Activated B cell treated with CpG ODN at 0.5 μM for 24 hours (primary cell): ENCODE measurements at regions of chr18 and their contacts with region 1.

Region 1: GRCh38 chr18:74342416-74343043 is 26.9 kb downstream of the C18orf63 start:
- DNase-seq: no peak
- ATAC-seq: no peak
- H3K4me3 Mint-ChIP-seq: no peak overlapping the region
- H3K27ac Mint-ChIP-seq: no peak overlapping the region
- H3K4me1 Mint-ChIP-seq: peaks cover 22% of the 10 kb centered on the region
- H3K27me3 Mint-ChIP-seq: no peaks in the 10 kb centered on the region
- CTCF ChIP-seq: peak; percentile 55

Region 2: DNA sequence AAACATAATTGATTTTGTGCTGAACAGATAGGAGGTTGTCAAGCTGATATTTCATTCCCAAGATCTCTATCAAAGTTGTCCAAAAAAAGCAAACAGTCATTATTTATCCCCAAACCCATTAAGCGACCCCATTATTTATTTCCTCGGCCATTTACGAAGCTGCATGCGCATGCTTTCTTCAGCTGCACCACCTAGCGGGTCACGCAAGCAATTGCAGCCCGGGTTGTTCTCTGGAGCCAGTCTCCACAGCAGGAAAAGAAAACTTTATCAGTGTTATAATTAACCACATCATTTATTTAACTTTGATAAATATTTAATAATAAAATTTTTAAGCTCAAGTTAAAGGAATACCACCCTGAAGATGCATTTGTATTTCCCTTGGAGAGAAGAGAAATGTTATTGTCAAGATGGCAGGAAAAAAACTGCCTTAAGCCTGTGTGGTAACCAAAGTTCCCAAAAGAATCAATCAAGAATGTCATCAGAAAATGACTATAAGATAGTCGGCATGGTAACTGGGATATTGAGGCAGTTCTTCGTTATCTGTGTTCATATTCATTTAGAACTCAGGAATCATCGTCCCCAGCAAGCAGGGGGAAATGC is 499.6 kb before region 1 on chr18:
- CTCF ChIA-PET with region 1: no interaction called
- POLR2A ChIA-PET with region 1: no interaction called
- intact Hi-C with region 1: loop called (anchors 2 kb)
- DNase-seq: no peak
- ATAC-seq: peak; percentile 52
- H3K4me3 Mint-ChIP-seq: peak overlapping the region; percentile 45
- H3K27ac Mint-ChIP-seq: no peak overlapping the region
- H3K4me1 Mint-ChIP-seq: peaks cover 3% of the 10 kb centered on the region
- H3K27me3 Mint-ChIP-seq: no peaks in the 10 kb centered on the region
- CTCF ChIP-seq: peak; percentile 88

Region 3: GRCh38 chr18:73901566-73901965 is 441.0 kb before region 1 on chr18:
- CTCF ChIA-PET with region 1: no interaction called
- POLR2A ChIA-PET with region 1: no interaction called
- intact Hi-C with region 1: no loop called
- DNase-seq: no peak
- ATAC-seq: no peak
- H3K4me3 Mint-ChIP-seq: no peak overlapping the region
- H3K27ac Mint-ChIP-seq: no peak overlapping the region
- H3K4me1 Mint-ChIP-seq: no peaks in the 10 kb centered on the region
- H3K27me3 Mint-ChIP-seq: no peaks in the 10 kb centered on the region
- CTCF ChIP-seq: no peak

Region 4: DNA sequence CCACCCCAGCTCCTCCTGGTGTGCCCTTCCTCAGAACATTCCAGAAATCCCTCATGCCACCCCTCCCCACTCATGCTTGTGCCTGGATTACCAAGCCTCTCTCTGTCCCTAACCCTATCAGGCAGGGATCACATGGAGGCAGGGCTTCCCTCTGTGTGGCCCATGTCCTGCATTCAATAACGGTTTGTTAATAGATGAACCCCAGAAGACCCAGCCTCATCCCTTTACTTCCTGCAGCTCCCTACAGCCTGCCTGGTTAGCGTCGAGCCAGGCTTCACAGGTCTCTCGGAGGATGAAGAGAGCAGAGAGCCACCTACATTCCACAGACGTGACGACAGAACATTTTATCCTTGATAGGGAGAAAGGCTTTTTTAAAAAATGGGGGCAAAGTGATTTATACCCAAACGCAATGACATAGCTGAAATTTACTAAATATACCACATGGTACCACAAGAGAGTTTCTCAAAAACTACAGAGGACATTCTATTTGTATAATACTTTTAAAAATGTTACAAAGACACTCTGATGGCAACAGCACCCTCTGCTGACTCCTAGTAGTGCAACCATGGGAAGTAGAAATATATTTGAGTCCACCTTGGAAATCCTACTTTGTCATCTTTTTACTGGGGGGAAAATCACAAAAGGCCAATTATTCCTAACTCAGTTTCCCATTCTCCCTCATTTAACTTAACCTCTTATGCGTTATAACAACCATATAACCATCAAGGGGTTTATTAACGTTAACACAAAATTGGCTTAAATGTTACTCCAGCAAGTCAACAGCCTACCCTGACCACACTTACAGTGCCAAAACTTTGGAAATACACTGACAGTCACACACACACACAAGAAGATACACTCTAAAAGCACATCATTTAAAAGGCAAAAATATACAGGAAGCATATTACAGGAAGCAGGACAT is 225.6 kb before region 1 on chr18:
- CTCF ChIA-PET with region 1: no interaction called
- POLR2A ChIA-PET with region 1: no interaction called
- intact Hi-C with region 1: loop called (anchors 1 kb)
- DNase-seq: no peak
- ATAC-seq: no peak
- H3K4me3 Mint-ChIP-seq: no peak overlapping the region
- H3K27ac Mint-ChIP-seq: no peak overlapping the region
- H3K4me1 Mint-ChIP-seq: peaks cover 9% of the 10 kb centered on the region
- H3K27me3 Mint-ChIP-seq: peaks cover 5% of the 10 kb centered on the region
- CTCF ChIP-seq: no peak

Region 5: DNA sequence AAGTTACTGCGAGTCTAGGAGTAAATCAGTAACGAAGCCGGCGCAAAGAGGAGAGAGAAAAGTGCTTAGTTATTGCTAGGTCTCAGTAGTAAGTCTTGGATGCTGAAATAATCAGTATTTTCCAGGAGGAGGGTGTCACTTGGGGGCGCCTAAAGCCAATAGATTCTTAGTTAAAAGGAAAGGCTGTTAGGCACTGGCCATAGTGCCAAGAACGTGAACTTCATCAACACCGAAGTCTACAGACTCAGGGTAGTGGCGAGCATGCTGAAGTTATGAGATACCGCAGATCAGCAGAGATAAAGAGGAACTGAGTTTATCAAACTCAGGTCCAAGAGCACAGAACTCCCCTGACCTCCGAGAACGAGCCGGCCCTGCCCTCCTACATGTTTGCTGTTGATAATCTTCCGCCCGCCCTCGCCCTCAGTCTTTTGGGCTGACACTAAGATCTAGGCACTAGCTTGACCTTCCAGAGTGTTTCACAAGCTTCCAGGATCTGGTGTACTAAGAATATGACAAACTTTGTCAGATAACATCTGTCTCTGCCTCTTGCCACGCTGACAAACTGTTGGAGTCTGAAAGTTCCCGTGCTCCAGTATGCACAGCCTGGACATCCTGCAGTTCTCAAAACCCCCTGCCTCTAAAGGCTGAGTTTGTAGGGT is 100.0 kb before region 1 on chr18:
- CTCF ChIA-PET with region 1: interaction called, 16 read pairs
- POLR2A ChIA-PET with region 1: no interaction called
- intact Hi-C with region 1: loop called (anchors 1 kb)
- DNase-seq: no peak
- ATAC-seq: peak; percentile 37
- H3K4me3 Mint-ChIP-seq: no peak overlapping the region
- H3K27ac Mint-ChIP-seq: peak overlapping the region; percentile 18
- H3K4me1 Mint-ChIP-seq: peaks cover 42% of the 10 kb centered on the region
- H3K27me3 Mint-ChIP-seq: peaks cover 11% of the 10 kb centered on the region
- CTCF ChIP-seq: no peak

Region 6: DNA sequence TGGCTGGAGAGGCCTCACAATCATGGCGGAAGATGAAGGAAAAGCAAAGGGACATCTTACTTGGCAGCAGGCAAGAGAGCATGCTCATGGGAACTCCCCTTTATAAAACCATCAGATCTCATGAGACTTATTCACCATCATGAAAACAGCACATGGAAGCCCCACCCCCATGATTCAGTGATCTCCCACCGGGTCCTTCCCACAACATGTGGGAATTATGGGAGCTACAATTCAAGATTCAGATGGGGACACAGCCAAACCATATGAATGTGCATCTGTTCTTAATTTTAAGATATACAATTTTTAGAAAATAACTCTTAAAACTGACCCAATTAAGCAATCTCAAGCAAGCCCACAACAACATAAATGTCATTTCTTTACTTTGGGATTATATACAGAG is 14.3 kb before region 1 on chr18:
- CTCF ChIA-PET with region 1: interaction called, 10 read pairs
- POLR2A ChIA-PET with region 1: no interaction called
- intact Hi-C with region 1: no loop called
- DNase-seq: no peak
- ATAC-seq: no peak
- H3K4me3 Mint-ChIP-seq: no peak overlapping the region
- H3K27ac Mint-ChIP-seq: no peak overlapping the region
- H3K4me1 Mint-ChIP-seq: peaks cover 15% of the 10 kb centered on the region
- H3K27me3 Mint-ChIP-seq: peaks cover 3% of the 10 kb centered on the region
- CTCF ChIP-seq: no peak